GM12878 (cell line): ENCODE measurements at regions of chr6 and their contacts with region 1.

Region 1: DNA sequence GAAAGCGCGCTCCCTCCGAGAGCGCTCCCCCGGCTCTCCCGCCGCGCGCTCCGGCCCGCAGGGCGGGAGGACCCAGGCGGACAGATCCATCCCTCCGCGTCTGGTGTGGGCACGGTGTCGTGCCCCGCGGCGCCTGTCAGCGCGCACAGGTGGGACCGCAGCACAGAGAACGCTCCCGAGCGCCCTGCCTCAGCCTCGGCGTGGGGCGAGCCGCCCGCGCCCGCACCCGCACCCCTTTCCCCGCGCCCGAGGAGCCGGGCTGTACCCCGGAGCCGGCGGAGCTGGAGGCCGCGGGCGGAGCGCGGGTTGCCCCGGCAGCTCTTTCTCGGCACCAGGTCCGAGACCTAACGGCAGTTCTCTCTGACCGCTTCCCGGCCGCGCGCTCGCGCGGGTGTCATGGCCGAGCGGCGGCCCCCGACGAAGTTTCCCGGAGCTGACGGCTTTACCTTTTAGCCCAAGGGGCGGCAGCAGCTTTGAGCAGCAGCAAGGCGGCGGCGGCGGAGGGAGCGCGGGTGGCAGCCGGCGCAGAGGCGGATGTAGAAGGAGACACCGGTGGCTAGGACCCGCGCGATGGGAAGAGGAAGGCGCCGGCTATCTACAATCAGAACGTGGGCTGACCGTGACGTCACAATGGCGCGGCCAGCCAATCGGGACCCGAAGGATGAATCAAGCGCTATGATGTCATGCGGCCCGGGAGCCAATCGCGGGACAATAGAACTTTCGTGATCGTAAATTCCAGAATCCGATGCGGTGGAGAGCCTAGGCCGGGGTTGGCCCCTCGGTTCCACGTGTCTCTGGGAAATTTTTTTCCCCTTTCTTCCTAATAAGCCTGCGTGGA is at the start of gene ELOVL5:
- DNase-seq: peak; percentile 73
- ATAC-seq: peak; percentile 80
- H3K4me3 ChIP-seq: peak within 1 kb of the TSS; percentile 92
- H3K27ac ChIP-seq: peak within 1 kb of the TSS; percentile 85
- H3K4me1 ChIP-seq: peaks cover 11% of the 10 kb centered on the region
- H3K27me3 ChIP-seq: no peaks in the 10 kb centered on the region; a peak in 1 of 4 replicates
- CTCF ChIP-seq: no peak
- EP300 ChIP-seq: no peak
- POLR2A ChIP-seq: peak; percentile 81
- RAD21 ChIP-seq: no peak
- polyA plus RNA-seq, gene ELOVL5: 187 to 195 TPM

Region 2: GRCh38 chr6:53189554-53189953 is 159.0 kb before region 1 on chr6:
- CTCF ChIA-PET with region 1: interaction called, 4 read pairs
- POLR2A ChIA-PET with region 1: no interaction called
- RAD21 ChIA-PET with region 1: interaction called, 13 read pairs
- SMC1A ChIA-PET with region 1: interaction called, 11 read pairs
- in situ Hi-C with region 1: no loop called
- intact Hi-C with region 1: no loop called
- DNase-seq: no peak
- ATAC-seq: peak; percentile 20; the same call in 2 of the 3 replicates
- H3K4me3 ChIP-seq: no peak overlapping the region
- H3K27ac ChIP-seq: no peak overlapping the region
- H3K4me1 ChIP-seq: no peaks in the 10 kb centered on the region; the same call in 1 of the 2 replicates
- H3K27me3 ChIP-seq: no peaks in the 10 kb centered on the region
- CTCF ChIP-seq: no peak
- EP300 ChIP-seq: no peak
- POLR2A ChIP-seq: no peak
- RAD21 ChIP-seq: no peak

Region 3: DNA sequence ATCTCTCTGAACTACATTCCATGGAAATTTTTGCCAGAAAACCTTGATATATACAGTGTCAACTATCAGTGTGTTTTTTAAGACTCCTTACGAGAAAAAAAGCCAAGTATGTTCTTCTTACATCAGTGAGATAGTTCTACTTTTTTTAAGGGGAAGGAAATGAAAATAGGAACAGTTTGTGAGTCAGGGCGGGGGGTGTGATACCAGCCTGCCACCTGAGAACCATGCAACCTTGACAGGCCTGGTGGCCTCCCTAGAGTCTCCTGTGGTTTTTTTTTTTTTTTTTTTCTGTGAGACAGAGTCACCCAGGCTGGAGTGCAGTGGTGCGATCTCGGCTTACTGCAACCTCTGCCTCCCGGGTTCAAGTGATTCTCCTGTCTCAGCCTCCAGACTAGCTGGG is 103.6 kb before region 1 on chr6:
- CTCF ChIA-PET with region 1: no interaction called
- POLR2A ChIA-PET with region 1: no interaction called
- RAD21 ChIA-PET with region 1: no interaction called
- SMC1A ChIA-PET with region 1: interaction called, 4 read pairs
- in situ Hi-C with region 1: no loop called
- intact Hi-C with region 1: loop called (anchors 5 kb)
- DNase-seq: peak; percentile 72
- ATAC-seq: peak; percentile 87
- H3K4me3 ChIP-seq: no peak overlapping the region
- H3K27ac ChIP-seq: no peak overlapping the region
- H3K4me1 ChIP-seq: peaks cover 35% of the 10 kb centered on the region
- H3K27me3 ChIP-seq: no peaks in the 10 kb centered on the region
- CTCF ChIP-seq: no peak
- EP300 ChIP-seq: peak in 1 of 2 experiments; percentile 51; a peak in 1 of 4 replicates
- POLR2A ChIP-seq: no peak
- RAD21 ChIP-seq: no peak

Region 4: DNA sequence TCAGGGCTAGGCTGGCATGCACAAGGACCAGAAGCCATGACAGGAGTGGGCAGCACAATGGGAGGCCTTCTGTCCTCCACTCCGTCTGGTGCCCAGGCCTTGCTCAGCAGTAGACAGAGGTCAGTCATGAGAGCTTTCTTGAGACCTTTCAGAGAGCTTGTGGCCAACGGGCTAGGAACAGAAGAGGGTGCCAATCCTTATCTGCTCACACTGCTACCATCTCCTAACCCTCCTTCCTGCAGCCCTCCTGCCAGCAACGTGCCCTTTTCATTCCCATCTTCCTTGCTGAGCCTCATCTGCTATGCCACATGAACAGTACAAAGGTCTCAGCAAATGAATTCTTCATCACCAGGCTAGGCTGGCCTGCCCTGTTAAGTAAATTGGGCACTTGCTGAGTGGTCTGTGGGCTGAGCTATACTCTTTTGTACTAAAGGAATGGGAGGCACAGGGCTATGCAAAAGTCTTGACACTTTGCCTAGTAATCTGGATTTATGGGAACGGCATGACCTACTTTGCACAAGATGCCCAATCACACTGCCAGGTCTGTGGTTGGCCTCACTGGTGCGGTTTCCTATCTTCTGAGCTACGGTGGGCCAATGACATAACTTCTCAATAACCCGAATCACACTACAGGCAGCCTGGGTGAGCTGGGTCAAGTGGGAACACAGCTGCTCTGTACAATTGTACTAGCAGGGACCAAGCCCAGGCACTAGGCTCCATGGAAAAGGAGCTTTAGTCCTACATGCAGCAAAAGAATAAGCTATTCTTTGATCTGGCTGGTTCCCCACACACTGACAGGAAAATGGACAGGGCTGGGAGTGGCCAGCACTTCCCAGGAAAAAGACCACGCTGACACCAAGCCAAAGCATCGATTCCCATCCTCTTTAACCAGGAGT is 47.7 kb before region 1 on chr6:
- CTCF ChIA-PET with region 1: interaction called, 6 read pairs
- POLR2A ChIA-PET with region 1: interaction called, 7 read pairs
- RAD21 ChIA-PET with region 1: interaction called, 15 read pairs
- SMC1A ChIA-PET with region 1: interaction called, 32 read pairs
- in situ Hi-C with region 1: no loop called
- intact Hi-C with region 1: no loop called
- DNase-seq: no peak
- ATAC-seq: peak; percentile 47
- H3K4me3 ChIP-seq: no peak overlapping the region
- H3K27ac ChIP-seq: no peak overlapping the region
- H3K4me1 ChIP-seq: peaks cover 4% of the 10 kb centered on the region
- H3K27me3 ChIP-seq: no peaks in the 10 kb centered on the region
- CTCF ChIP-seq: no peak
- EP300 ChIP-seq: no peak
- POLR2A ChIP-seq: no peak
- RAD21 ChIP-seq: no peak

Region 5: GRCh38 chr6:53309059-53309900 is 39.3 kb before region 1 on chr6:
- CTCF ChIA-PET with region 1: interaction called, 17 read pairs
- POLR2A ChIA-PET with region 1: interaction called, 32 read pairs
- RAD21 ChIA-PET with region 1: interaction called, 58 read pairs
- SMC1A ChIA-PET with region 1: interaction called, 91 read pairs
- in situ Hi-C with region 1: no loop called
- intact Hi-C with region 1: loop called (anchors 2 kb)
- DNase-seq: peak; percentile 42
- ATAC-seq: peak; percentile 58
- H3K4me3 ChIP-seq: no peak overlapping the region
- H3K27ac ChIP-seq: peak overlapping the region; percentile 10
- H3K4me1 ChIP-seq: peaks cover 39% of the 10 kb centered on the region
- H3K27me3 ChIP-seq: no peaks in the 10 kb centered on the region
- CTCF ChIP-seq: no peak
- EP300 ChIP-seq: peak in 1 of 2 experiments; percentile 19; a peak in 1 of 4 replicates
- POLR2A ChIP-seq: peak; percentile 28; the same call in 1 of the 2 replicates
- RAD21 ChIP-seq: no peak

Region 6: DNA sequence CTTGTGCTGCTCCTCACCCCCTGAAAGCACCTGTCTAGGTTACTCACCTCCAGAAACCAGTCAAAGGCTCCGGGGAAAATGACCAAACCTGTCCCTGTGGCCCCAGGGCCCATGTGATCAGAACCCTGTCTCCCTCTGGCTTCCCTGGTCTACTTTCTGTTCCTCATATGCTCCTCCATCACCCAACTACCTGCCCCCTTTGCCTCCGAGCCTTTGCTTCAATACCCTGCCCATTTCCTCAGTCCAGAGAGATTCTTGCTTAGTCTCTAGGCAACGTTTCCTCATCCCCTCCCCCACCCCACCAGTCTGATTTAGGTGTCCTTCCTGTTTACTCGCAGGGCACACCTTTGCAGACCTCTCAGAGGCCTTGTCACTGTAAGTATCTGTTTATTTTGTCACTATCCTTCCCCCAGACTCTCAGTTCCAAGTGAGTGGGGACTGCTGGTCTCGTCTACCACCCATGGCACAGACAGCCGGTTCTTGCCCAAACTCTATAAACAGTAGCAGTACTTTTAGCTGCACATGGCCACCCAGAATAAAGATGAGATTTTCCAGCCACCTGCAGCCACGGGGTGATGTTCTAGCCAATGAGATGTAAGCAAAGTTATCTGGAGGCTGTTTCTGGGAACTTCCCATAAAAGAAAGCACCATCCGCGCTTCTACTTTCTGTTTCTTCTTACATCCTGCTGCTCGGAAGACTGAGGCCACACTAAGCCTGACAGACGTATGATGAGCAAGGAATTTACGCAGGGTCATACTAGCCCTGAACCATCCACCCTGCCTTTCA is 13.2 kb before region 1 on chr6:
- CTCF ChIA-PET with region 1: interaction called, 12 read pairs
- POLR2A ChIA-PET with region 1: interaction called, 57 read pairs
- RAD21 ChIA-PET with region 1: interaction called, 51 read pairs
- SMC1A ChIA-PET with region 1: interaction called, 83 read pairs
- in situ Hi-C with region 1: no loop called
- intact Hi-C with region 1: no loop called
- DNase-seq: peak; percentile 88
- ATAC-seq: peak; percentile 90
- H3K4me3 ChIP-seq: peak overlapping the region; percentile 72
- H3K27ac ChIP-seq: peak overlapping the region; percentile 85
- H3K4me1 ChIP-seq: peaks cover 22% of the 10 kb centered on the region
- H3K27me3 ChIP-seq: no peaks in the 10 kb centered on the region
- CTCF ChIP-seq: no peak
- EP300 ChIP-seq: peak in 1 of 2 experiments; percentile 68; a peak in 2 of 4 replicates
- POLR2A ChIP-seq: peak; percentile 34; the same call in 1 of the 2 replicates
- RAD21 ChIP-seq: no peak

Region 7: DNA sequence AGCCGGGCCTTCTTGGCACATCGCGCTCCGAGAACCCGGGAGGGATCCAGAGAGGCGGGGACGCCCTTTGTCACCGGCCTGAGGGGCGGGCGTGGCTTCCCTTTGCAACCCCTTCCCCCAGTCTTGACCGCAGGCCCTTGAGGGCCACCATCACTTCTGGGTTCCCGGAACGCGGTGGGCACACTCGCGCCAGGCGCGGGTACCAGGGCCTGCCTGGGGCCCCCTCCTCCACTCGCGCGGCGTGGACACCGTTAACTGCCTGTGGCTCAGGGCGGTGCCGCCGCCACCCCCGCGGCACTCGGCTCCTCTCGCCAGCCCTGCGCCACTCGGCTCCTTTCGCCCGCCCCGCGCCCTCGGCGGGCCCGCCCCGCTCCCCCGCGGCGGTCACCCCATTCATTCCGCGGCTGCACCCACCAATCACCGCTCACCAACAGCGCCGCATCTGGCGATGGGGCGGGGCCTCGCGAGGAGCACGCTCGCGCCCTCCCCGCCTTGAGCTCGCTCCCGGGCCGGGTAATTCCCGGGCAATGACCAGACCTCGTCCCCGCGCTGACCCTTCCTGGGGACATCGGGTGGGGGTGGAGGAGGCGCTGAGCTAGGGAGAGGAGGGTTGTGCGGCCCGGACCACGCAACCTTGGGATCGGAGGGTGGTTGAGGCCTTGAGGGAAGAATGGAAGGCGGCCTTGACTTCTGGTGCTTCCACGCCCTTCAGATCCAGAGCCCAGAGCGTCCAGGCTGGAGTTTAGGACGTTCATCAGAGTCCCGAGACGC is 10.7 kb after region 1 on chr6:
- CTCF ChIA-PET with region 1: interaction called, 6 read pairs
- POLR2A ChIA-PET with region 1: interaction called, 36 read pairs
- RAD21 ChIA-PET with region 1: interaction called, 26 read pairs
- SMC1A ChIA-PET with region 1: interaction called, 15 read pairs
- in situ Hi-C with region 1: no loop called
- intact Hi-C with region 1: loop called (anchors 1 kb)
- DNase-seq: peak; percentile 78
- ATAC-seq: peak; percentile 95
- H3K4me3 ChIP-seq: peak overlapping the region; percentile 76
- H3K27ac ChIP-seq: peak overlapping the region; percentile 86
- H3K4me1 ChIP-seq: peaks cover 17% of the 10 kb centered on the region
- H3K27me3 ChIP-seq: no peaks in the 10 kb centered on the region
- CTCF ChIP-seq: no peak
- EP300 ChIP-seq: 0 out of 4 replicates have a peak, but pooled peaks of 1 of the 2 experiments have one; percentile 8
- POLR2A ChIP-seq: peak; percentile 94
- RAD21 ChIP-seq: no peak